Endothelial cell of umbilical vein (primary cell): ENCODE measurements at regions of chr3 and their contacts with region 1.

Region 1: DNA sequence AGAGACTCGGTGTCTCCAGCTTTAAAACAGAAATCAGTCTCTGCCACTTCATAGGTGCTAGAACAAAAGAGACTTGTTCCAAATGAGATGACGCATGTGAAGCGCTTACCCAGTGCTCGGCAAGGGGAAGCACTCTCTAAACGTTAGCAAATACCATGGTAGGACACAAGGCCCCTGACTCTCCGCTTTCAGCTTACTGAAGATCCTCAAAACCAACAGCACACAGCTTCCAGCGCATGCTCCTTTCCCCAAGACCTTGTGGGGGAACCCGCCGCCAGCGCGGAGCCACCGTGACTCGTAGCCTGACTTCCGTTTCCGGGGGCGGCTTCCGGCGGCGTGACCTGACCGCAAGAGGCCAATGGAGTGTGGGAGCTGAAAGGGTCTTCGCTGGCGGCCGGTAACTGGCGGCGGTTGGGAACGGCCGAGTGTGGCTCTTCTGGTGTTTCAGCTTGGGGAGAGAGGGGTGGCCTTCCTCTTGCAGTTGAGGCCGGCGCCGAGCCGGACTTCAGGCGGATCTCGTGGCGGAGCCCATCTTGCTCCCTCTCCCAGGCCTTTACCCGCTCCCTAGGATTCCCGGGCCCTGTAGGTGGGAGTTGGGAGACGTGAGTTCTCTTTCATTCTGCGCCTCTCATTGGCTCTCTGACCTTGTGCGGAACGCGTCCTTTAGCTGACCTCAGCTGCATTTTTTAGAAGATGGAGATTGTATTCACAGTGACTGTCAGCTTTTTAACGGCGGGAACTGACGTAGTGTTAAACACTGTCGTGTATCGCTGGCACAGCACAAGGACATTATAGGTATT is at the start of gene THUMPD3:
- DNase-seq: peak; percentile 90
- H3K4me3 ChIP-seq: peak within 1 kb of the TSS; percentile 50 to 72 (median 55)
- H3K27ac ChIP-seq: peak within 1 kb of the TSS; percentile 97
- H3K4me1 ChIP-seq: peaks cover 7% of the 10 kb centered on the region
- H3K27me3 ChIP-seq: no peaks in the 10 kb centered on the region
- CTCF ChIP-seq: no peak
- POLR2A ChIP-seq: peak; percentile 95
- total RNA-seq, gene THUMPD3: 22.7 and 26.5 TPM in 2 replicates

Region 2: GRCh38 chr3:9316881-9317361 is 46.0 kb before region 1 on chr3:
- CTCF ChIA-PET with region 1: no interaction called
- POLR2A ChIA-PET with region 1: no interaction called
- dilution Hi-C with region 1: no loop called
- intact Hi-C with region 1: loop called (anchors 1 kb)
- DNase-seq: peak; percentile 81
- H3K4me3 ChIP-seq: peak overlapping the region in 2 of 3 experiments; percentile 16 to 42
- H3K27ac ChIP-seq: peak overlapping the region; percentile 73
- H3K4me1 ChIP-seq: peaks cover 11% of the 10 kb centered on the region
- H3K27me3 ChIP-seq: no peaks in the 10 kb centered on the region
- CTCF ChIP-seq: no peak
- POLR2A ChIP-seq: no peak

Region 3: GRCh38 chr3:9396700-9397521 is 34.0 kb after region 1 on chr3:
- CTCF ChIA-PET with region 1: interaction called, 3 read pairs
- POLR2A ChIA-PET with region 1: interaction called, 20 read pairs
- dilution Hi-C with region 1: no loop called
- intact Hi-C with region 1: loop called (anchors 1 kb)
- DNase-seq: peak; percentile 99
- H3K4me3 ChIP-seq: peak overlapping the region; percentile 8 to 93 (median 43)
- H3K27ac ChIP-seq: peak overlapping the region; percentile 93
- H3K4me1 ChIP-seq: peaks cover 56% of the 10 kb centered on the region
- H3K27me3 ChIP-seq: no peaks in the 10 kb centered on the region
- CTCF ChIP-seq: no peak
- POLR2A ChIP-seq: peak; percentile 84

Region 4: DNA sequence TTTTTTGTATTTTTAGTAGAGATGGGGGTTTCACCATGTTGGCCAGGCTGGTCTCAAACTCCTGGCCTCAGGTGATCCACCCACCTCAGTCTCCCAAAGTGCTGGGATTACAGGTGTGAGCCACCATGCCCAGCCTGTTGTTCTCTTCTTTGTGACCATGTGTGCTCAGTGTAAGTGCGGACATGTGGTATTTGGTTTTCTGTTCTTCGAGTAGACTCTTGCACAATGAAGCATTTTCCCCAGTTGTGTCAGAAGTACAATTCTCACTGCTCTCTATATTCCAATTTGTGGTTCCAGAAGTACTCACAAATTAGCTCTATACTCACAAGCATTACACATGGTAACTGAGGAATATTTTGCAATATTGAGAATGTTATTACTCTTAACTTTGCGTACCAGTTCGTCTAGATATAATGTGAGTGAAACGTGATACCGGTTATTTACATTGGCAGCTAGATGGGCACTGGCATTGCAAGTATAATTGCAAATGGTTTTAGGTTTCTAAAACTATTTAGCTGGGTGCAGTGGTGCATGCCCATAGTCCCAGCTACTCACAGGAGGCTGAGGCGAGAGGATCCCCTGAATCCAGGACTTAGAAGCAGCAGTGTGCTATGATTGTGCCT is 252.2 kb after region 1 on chr3:
- CTCF ChIA-PET with region 1: no interaction called
- POLR2A ChIA-PET with region 1: no interaction called
- dilution Hi-C with region 1: no loop called
- intact Hi-C with region 1: no loop called
- DNase-seq: no peak
- H3K4me3 ChIP-seq: no peak overlapping the region
- H3K27ac ChIP-seq: no peak overlapping the region
- H3K4me1 ChIP-seq: no peaks in the 10 kb centered on the region
- H3K27me3 ChIP-seq: no peaks in the 10 kb centered on the region
- CTCF ChIP-seq: no peak
- POLR2A ChIP-seq: no peak

Region 5: GRCh38 chr3:9649791-9650521 is 287.0 kb after region 1 on chr3:
- CTCF ChIA-PET with region 1: no interaction called
- POLR2A ChIA-PET with region 1: no interaction called
- dilution Hi-C with region 1: no loop called
- intact Hi-C with region 1: loop called (anchors 2 kb)
- DNase-seq: no peak
- H3K4me3 ChIP-seq: peak overlapping the region; percentile 50 to 80 (median 77)
- H3K27ac ChIP-seq: peak overlapping the region; percentile 34
- H3K4me1 ChIP-seq: peaks cover 5% of the 10 kb centered on the region
- H3K27me3 ChIP-seq: no peaks in the 10 kb centered on the region
- CTCF ChIP-seq: no peak
- POLR2A ChIP-seq: no peak